ENCODE measurements at regions of chr3 and their contacts with region 1.

Region 1: DNA sequence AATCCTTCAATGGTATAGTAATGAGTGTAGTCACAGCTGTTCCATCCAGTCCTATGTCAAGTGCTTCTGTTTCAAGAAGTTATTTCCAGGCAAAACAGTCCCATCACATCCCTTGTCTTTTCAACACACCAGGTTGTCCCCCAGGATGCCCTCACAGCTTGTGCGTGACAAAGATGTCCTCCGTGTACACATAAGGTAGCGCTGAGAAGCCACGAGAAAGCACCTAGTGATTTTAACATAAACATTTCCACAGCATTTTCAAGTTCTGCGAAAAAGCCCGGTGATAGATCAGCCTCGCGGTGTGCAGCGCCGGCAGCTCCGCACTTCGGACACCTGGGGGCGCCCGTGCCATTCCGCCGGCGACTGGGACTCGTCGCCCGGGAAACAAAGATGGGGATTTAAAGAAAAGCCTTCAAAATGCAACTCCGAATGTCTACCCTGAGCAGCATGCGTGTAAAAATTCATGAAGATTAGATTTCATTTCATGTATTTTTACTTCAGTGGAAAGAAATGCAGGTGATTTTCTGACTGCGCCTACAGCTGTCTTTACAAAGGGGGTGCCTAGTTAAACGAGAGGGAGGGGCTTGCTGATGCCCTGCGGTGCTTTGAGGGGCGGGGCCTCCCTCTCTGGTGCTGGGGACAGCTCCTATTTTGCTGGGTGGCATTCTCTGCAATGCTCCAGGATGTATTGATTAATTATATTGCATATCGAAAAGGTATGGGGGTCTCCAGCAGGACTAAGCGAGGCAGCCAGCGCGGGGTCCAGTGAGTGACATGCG is 49.9 kb downstream of the KY start:
- DNase-seq: peak; percentile 68
- ATAC-seq: peak; percentile 72 to 73

Region 2: DNA sequence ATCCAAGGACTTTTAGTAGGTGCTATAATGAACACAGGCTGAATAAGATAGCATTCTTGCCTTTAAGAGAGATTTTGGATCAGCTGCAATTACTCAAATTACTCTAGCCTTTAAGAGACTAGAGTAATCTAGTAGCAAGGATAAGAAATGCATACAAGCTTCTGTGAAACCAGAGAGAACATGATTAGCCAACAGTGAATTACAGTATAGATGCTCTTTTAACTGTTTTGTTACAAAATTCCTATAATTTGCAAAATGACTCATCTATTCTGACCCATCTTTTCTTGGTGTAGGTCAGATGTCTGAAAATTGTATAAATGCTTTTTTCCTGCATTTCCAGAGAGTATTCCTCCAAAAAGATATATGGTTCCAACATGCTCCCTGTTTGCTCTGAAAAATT is 48.1 kb before region 1 on chr3:
- intact Hi-C with region 1: no loop called
- DNase-seq: no peak
- ATAC-seq: no peak

Region 3: GRCh38 chr3:134754768-134755559 is 154.1 kb after region 1 on chr3:
- intact Hi-C with region 1: loop called in 1 of 2 experiments (anchors 10 kb)
- DNase-seq: peak; percentile 26
- ATAC-seq: peak in 1 of 2 donors; percentile 46

Region 4: GRCh38 chr3:135503760-135504686 is 903.1 kb after region 1 on chr3:
- intact Hi-C with region 1: loop called in 1 of 2 experiments (anchors 5 kb)
- DNase-seq: peak; percentile 63
- ATAC-seq: peak; percentile 55 to 74

Region 5: DNA sequence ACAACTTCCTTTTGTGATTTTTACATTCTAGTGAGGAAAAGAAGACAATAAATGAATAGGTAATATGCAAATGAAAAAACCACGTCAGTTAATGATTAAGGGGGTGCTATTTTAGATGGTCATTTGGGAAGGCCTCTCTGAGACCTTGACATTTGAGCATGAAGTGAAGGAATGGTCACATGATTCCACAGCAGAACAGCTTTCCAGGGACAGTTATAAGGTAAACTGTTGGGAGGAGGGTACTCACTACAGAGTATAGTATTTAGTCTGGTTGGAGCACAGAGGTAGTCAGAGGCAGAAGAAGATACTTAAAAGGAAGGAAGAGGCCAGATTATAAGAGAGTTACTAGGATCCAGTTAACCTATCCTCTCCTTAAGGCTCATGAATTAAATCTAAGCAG is 1904.8 kb after region 1 on chr3:
- intact Hi-C with region 1: no loop called
- DNase-seq: no peak
- ATAC-seq: no peak